Endothelial cell of umbilical vein (primary cell): ENCODE measurements at regions of chr2 and their contacts with region 1.

Region 1: DNA sequence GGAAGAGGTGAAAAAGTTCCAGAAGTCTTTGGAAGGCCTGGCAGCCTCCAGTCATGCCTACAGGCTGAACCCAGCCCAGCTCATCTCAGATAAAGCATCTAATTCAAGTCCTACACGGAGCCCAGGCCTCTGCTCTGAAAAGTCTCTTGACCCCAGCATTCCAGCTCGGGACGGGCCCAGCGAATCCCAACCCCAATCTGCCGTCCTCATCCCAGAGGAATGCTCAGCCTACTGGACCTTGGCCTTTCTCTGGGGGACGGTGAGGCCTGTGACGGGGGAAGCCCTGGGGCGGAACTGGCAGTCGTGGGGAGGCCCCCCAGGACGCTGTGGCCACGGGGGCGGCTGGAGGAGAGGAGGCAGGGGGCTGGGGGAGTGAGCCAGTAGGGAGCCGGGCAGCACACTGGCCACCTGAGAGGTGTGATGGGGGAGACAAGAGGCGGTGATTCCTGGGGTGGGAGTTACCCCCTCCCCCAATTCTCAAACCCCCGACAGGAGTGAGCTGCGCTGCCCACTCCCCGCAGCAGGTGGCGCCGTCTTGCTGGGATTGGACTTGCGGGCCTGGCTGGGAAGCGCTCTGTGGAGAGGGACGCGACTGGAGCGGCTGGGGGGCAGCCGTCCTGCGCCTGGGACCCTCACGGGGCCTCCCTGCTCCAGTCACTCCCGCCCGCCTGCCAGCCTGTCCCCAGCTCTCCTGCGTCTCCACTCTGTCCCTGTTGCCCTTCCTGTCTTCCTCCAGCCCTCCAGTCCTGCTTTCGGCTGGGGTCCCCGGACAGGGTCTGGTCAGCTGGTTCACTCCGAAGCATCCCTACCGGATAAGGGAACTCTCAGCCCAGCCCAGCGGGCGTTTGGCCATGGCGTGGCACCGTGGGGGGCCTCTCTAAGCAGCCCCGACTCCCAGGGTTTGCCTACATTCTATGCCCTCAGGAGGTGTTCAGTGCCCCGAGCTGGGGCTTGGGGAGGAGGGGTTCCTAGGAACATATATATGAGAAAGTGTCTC is 182.6 kb upstream of the HAAO start:
- DNase-seq: peak; percentile 66
- H3K4me3 ChIP-seq: peak overlapping the region in 2 of 3 experiments; percentile 21 to 44
- H3K27ac ChIP-seq: no peak overlapping the region
- H3K4me1 ChIP-seq: peaks cover 4% of the 10 kb centered on the region
- H3K27me3 ChIP-seq: no peaks in the 10 kb centered on the region
- CTCF ChIP-seq: peak; percentile 81 to 95
- POLR2A ChIP-seq: no peak

Region 2: GRCh38 chr2:42622943-42623676 is 351.9 kb before region 1 on chr2:
- CTCF ChIA-PET with region 1: no interaction called
- POLR2A ChIA-PET with region 1: no interaction called
- dilution Hi-C with region 1: no loop called
- intact Hi-C with region 1: no loop called
- DNase-seq: peak; percentile 4
- H3K4me3 ChIP-seq: no peak overlapping the region
- H3K27ac ChIP-seq: no peak overlapping the region
- H3K4me1 ChIP-seq: peaks cover 17% of the 10 kb centered on the region
- H3K27me3 ChIP-seq: no peaks in the 10 kb centered on the region
- CTCF ChIP-seq: no peak
- POLR2A ChIP-seq: no peak

Region 3: DNA sequence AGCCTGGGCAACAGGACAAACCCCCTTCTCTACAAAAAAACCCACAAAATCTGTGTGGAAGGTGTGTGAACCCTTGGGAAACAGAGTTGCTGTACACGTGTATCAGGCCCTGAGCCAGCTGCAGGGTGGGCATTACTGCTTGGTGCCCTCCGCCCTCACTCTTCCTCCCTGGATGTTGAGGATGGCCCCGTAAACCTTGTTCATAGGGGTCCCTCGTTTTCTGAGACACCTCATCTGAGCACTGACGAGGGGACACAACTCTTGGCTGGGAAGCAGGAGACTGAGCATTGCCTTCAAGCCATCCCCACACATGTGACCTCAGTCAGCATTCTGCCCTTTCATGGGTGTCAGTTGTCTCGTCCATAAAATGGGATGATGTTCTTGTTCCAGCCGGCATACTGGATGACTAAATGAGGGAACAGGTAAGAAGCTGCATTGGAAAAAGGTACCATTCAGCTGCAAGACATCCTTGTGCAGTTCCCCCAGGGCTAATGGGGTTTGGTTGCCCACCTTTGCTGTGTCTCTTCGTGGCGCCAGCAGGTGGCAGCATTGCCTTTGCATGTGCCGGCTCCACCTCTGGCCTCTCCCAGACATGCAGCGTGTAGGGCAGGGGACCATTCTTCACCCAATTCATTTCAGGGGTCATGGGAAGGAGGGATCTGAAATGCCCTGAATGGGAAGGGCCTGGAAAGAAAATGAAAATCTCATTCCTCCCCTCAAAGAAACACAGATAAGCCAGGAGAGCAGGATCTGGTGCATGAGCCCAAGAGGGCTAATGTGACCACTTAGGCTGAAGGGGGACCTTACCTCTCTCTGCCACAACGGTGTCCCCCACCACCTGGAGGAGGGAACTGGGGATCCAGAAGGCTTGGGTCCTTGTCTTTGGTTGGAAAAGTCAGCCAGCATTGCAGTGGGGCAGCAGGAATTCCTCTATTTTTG is 146.3 kb before region 1 on chr2:
- CTCF ChIA-PET with region 1: interaction called, 3 read pairs
- POLR2A ChIA-PET with region 1: interaction called, 8 read pairs
- dilution Hi-C with region 1: no loop called
- intact Hi-C with region 1: loop called (anchors 1 kb)
- DNase-seq: peak; percentile 66
- H3K4me3 ChIP-seq: no peak overlapping the region
- H3K27ac ChIP-seq: no peak overlapping the region
- H3K4me1 ChIP-seq: no peaks in the 10 kb centered on the region
- H3K27me3 ChIP-seq: no peaks in the 10 kb centered on the region
- CTCF ChIP-seq: peak; percentile 91 to 93
- POLR2A ChIP-seq: no peak

Region 4: DNA sequence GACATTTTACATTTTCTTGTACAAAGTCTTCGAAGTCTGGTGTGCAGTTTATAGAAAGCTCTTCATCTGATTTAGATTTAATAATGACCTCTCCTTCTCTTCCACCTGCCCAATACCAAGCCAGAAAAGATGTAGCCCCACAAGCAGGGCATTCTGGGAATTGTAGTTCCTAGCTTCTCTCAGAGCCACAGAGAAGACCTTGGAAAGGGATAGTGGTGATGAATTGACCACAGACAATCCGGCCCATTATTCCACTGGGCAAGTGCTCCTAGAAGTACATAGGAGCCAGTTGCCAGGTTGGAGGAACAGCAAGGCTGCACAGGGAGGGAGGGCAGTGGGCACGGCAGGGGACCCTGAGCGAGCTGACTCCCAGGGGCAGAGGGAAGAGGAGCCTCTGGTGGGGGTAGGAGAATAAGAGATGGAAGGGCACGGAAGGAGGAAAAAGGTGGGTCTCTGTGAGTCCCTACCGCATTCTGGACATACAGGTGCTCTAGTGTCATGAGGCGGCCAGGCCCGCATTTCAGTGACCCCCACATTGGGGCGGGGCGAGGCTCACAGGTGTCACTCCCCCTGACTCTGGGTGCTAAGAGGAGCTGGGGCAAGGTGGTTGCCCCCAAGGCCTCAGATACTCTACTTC is 30.1 kb before region 1 on chr2:
- CTCF ChIA-PET with region 1: interaction called, 27 read pairs
- POLR2A ChIA-PET with region 1: no interaction called
- dilution Hi-C with region 1: no loop called
- intact Hi-C with region 1: loop called (anchors 1 kb)
- DNase-seq: no peak
- H3K4me3 ChIP-seq: no peak overlapping the region
- H3K27ac ChIP-seq: no peak overlapping the region
- H3K4me1 ChIP-seq: no peaks in the 10 kb centered on the region
- H3K27me3 ChIP-seq: no peaks in the 10 kb centered on the region
- CTCF ChIP-seq: no peak
- POLR2A ChIP-seq: no peak

Region 5: GRCh38 chr2:42987112-42987922 is 12.3 kb after region 1 on chr2:
- CTCF ChIA-PET with region 1: interaction called, 11 read pairs
- POLR2A ChIA-PET with region 1: no interaction called
- dilution Hi-C with region 1: no loop called
- intact Hi-C with region 1: no loop called
- DNase-seq: no peak
- H3K4me3 ChIP-seq: no peak overlapping the region
- H3K27ac ChIP-seq: no peak overlapping the region
- H3K4me1 ChIP-seq: peaks cover 5% of the 10 kb centered on the region
- H3K27me3 ChIP-seq: peaks cover 4 to 5% of the 10 kb centered on the region in 2 experiments
- CTCF ChIP-seq: no peak
- POLR2A ChIP-seq: no peak

Region 6: DNA sequence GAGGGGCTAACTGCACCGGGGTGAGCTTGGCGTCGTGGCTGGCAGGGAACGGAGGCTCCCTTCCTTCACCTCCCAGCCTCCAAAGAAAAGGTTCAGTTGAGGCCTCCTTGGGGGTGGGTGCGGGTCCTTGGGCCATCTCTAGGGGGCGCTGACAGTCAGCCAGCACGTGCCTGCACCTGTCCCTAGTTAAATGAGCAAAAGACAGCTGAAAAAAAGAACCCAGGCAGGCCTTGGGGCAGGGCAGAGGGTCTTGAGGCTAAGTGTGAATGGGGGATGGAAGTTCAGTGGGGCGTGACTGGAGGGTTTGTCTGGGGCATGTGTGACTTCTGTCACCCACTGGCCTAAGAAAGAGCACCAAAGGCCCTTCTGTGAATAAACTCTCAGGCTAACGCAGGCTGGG is 195.0 kb after region 1 on chr2:
- CTCF ChIA-PET with region 1: interaction called, 9 read pairs
- POLR2A ChIA-PET with region 1: no interaction called
- dilution Hi-C with region 1: no loop called
- intact Hi-C with region 1: loop called (anchors 1 kb)
- DNase-seq: peak; percentile 59
- H3K4me3 ChIP-seq: no peak overlapping the region
- H3K27ac ChIP-seq: peak overlapping the region; percentile 88
- H3K4me1 ChIP-seq: peaks cover 47% of the 10 kb centered on the region
- H3K27me3 ChIP-seq: no peaks in the 10 kb centered on the region
- CTCF ChIP-seq: peak; percentile 76 to 78
- POLR2A ChIP-seq: no peak

Region 7: DNA sequence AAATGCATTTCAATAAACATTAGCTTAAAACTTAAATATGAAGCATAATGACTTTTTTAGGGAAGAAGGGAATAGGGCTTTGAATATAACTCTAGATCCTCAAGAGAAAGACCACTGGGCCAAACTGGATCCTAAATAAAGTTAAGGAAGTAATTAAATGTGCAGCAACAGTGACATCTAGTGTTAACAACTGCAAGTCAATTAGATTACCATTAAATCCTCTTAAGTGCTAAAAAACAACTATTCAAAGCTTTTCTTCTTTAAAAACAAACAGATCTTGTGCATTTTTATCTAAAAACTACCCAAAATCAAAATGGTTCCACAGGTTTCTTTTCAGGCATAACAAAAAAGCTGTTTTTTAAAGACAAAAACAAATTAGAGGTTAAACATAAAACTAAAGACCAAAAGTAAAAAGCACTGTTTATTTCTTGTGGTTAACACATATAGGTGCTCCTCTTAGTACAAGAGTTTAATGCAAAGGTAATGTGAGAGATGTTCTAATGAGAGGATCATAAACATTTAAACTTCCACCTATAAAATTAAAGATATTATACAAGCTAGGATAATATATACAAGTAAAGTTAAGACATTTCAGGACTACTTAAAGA is 509.4 kb after region 1 on chr2:
- CTCF ChIA-PET with region 1: interaction called, 45 read pairs
- POLR2A ChIA-PET with region 1: no interaction called
- dilution Hi-C with region 1: no loop called
- intact Hi-C with region 1: loop called (anchors 1 kb)
- DNase-seq: peak; percentile 84
- H3K4me3 ChIP-seq: no peak overlapping the region
- H3K27ac ChIP-seq: no peak overlapping the region
- H3K4me1 ChIP-seq: peaks cover 7% of the 10 kb centered on the region
- H3K27me3 ChIP-seq: no peaks in the 10 kb centered on the region
- CTCF ChIP-seq: peak; percentile 31 to 32
- POLR2A ChIP-seq: no peak